Breast epithelium (tissue), 4 donors: ENCODE measurements at regions of chr22 and their contacts with region 1.

Region 1: GRCh38 chr22:26461188-26461810 is 22.3 kb downstream of the HPS4 start:
- DNase-seq: no peak
- H3K4me3 ChIP-seq: no peak overlapping the region
- H3K27ac ChIP-seq: no peak overlapping the region
- H3K4me1 ChIP-seq: no peaks in the 10 kb centered on the region
- H3K27me3 ChIP-seq: no peaks in the 10 kb centered on the region
- CTCF ChIP-seq: peak in 2 of 3 donors; percentile 54 to 58
- POLR2A ChIP-seq: no peak

Region 2: GRCh38 chr22:26547426-26547825 is 86.1 kb after region 1 on chr22:
- intact Hi-C with region 1: loop called (anchors 5 kb)
- DNase-seq: no peak
- H3K4me3 ChIP-seq: no peak overlapping the region
- H3K27ac ChIP-seq: no peak overlapping the region
- H3K4me1 ChIP-seq: no peaks in the 10 kb centered on the region
- H3K27me3 ChIP-seq: no peaks in the 10 kb centered on the region
- CTCF ChIP-seq: no peak
- POLR2A ChIP-seq: no peak